Activated naive CD4-positive, alpha-beta T cell treated with anti-CD3 and anti-CD28 coated beads, Interleukin-2, amount 10 ng/mL, durations not matched to agents 7 days and 5 days (primary cell): ENCODE measurements at regions of chr3 and their contacts with region 1.

Region 1: DNA sequence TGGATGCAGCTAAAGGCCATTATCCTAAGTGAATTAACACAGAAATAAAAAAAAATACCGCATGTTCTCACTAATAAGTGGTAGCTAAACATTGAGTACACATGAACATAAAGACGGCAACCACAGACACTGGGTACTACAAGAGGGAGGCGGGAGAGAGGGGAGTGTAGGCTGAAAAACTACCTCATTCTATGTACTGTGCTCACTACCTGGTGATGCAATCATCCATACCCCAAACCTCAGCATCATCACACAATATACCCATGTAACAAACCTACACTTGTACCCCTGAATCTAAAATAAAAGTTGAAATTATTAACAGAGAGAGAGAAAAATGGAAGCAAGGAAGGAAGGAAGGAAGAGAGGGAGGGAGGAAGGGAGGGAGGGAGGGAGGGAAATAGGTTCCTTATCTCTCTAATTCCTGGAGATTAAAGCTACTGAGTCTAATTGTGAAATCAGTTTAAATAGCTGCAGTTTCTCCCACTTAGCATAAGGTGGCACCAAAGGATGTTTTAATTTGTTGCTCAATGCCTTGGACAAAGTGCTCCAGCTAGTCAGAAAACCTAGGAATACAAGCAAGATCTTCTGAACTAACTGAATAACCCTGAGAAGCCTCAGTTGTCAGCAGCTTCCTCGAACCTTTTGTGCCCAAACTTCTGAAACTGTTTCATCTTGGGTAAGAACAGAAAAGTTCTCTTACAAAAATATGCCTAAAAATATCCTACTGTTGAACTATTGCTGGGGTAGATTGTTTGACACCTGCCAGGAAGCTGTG is 79.4 kb upstream of the ATP11B start:
- DNase-seq: no peak
- H3K4me3 Mint-ChIP-seq: no peak overlapping the region
- H3K27ac Mint-ChIP-seq: no peak overlapping the region
- H3K4me1 Mint-ChIP-seq: peaks cover 13% of the 10 kb centered on the region
- H3K27me3 Mint-ChIP-seq: no peaks in the 10 kb centered on the region

Region 2: DNA sequence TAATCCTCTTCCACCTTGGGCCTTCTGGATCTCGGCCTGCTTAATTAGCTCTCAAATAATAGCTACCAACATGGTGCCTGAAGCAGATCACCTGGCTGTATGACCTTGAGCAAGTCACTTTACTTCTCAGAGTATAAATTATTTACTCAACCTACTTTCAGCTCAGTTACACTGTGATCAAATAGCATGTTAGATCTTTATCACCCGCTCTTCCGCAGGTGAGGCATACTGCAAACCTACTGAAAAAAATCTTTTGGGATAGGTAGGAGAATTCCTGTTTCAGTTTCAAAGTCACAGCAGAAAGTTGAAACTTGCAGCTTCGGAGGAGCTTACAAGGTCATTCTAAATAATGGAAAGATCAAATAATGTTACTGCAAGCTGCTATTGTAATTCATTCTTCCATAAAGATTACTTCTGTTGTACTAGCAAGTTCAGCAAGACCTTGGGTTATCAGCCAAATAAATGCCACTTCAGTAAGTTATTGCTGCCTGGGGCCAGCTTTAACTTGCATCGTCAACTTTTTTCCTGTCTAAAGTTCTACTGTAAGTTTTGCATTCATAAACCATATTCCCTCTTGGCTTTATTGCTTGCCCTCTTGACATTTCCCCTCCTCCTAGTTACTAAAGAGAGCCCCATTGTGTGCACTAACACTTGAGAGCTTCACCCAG is 189.1 kb before region 1 on chr3:
- CTCF ChIA-PET with region 1: no interaction called
- DNase-seq: no peak
- H3K4me3 Mint-ChIP-seq: no peak overlapping the region
- H3K27ac Mint-ChIP-seq: no peak overlapping the region
- H3K4me1 Mint-ChIP-seq: no peaks in the 10 kb centered on the region
- H3K27me3 Mint-ChIP-seq: no peaks in the 10 kb centered on the region

Region 3: GRCh38 chr3:182837855-182838454 is 124.0 kb after region 1 on chr3:
- CTCF ChIA-PET with region 1: interaction called, 19 read pairs
- DNase-seq: no peak
- H3K4me3 Mint-ChIP-seq: no peak overlapping the region
- H3K27ac Mint-ChIP-seq: no peak overlapping the region
- H3K4me1 Mint-ChIP-seq: peaks cover 2% of the 10 kb centered on the region
- H3K27me3 Mint-ChIP-seq: no peaks in the 10 kb centered on the region

Region 4: DNA sequence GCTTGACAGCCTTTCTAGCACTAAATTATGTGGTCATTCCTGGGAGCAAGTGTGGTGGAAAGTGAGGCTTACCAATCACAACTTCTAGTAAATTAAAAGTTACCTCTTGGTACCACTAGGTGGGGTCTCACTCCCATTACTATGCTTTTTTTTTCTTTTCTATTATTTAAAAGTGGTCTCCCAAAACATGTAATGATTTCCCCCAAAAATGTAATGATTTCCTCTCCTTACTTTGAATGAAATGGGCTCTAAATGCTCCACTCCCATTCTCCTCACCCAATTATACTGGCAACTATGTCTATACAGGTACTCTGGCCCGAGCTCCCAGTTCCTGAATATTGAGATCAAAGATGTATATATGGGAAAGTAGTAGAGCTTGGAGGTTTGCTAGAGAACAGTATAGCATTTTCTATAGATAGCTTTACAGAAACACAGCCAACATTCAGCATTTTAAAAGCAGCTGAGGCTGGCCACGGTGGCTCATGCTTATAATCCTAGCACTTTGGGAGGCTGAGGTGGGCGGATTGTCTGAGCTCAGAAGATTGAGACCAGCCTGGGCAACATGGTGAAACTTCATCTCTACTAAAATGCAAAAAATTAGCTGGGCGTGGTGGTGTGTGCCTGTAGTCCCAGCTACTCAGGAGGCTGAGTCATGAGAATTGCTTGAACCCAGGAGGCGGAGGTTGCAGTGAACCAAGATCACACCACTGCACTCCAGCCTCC is 195.5 kb after region 1 on chr3:
- CTCF ChIA-PET with region 1: interaction called, 17 read pairs
- DNase-seq: no peak
- H3K4me3 Mint-ChIP-seq: no peak overlapping the region
- H3K27ac Mint-ChIP-seq: peak overlapping the region; percentile 14
- H3K4me1 Mint-ChIP-seq: peaks cover 50% of the 10 kb centered on the region
- H3K27me3 Mint-ChIP-seq: no peaks in the 10 kb centered on the region